Heart left ventricle (tissue), 16 donors: ENCODE measurements at regions of chrX and their contacts with region 1.

Region 1: DNA sequence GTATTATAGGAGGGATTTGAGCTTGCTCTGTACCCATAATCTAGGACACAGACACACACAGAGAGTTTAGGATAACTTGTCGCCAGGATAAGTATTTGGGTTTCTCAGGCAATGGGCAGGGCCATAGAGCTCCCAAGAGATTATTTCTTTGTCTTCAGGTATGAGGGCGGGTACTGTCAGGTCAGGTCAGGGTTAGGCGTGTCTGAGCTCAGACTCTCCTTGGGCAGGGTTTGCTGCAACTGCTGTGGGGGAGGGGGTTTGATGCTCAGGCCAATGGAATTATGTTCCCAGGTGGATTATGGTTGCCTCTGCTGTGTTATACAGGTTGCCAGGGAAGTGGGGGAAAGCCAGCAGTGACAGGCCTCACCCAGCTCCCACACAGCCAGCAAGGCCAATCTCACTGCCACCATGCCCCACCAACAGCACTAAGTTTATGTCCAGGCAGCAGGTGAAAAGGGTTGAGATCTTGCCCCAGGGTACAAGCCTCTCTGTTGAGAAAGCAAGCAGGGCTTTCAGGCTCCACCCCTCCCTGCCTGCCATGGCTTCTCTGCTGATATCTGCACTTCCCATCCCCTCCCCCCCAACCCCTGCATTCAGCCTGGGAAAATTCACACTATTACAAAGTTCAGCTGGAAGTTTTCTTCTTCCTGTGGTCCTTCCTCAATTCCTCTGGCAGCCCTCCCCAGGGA is 101.3 kb downstream of the RRAGB start:
- DNase-seq: no peak
- ATAC-seq: no peak
- H3K4me3 ChIP-seq: no peak overlapping the region
- H3K27ac ChIP-seq: no peak overlapping the region
- H3K4me1 ChIP-seq: no peaks in the 10 kb centered on the region
- H3K27me3 ChIP-seq: no peaks in the 10 kb centered on the region
- CTCF ChIP-seq: no peak
- POLR2A ChIP-seq: no peak

Region 2: DNA sequence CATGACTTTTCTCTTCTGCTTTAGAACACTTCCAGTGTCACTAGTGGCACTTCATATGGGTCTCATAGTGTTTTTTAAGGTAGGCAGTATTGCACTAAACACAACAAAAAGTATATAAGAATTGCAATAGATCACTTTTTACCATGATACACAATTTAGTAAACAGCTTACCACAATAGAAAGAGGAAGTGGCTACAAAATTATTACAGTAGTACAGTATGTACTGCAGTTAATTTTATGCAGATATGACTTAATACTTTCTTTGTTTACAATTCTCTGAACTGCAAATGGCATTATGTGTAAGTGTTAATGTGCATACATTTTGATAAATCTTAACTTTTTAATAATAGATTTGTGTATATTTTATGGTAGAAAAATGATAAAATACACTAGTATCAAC is 56.0 kb after region 1 on chrX:
- intact Hi-C with region 1: loop called in 1 of 10 experiments (anchors 10 kb)
- DNase-seq: no peak
- ATAC-seq: no peak
- H3K4me3 ChIP-seq: no peak overlapping the region
- H3K27ac ChIP-seq: no peak overlapping the region
- H3K4me1 ChIP-seq: no peaks in the 10 kb centered on the region
- H3K27me3 ChIP-seq: peaks cover 0 to 3% (median 0%) of the 10 kb centered on the region in 9 donors
- CTCF ChIP-seq: no peak
- POLR2A ChIP-seq: no peak